B cell (primary cell): ENCODE measurements at regions of chr12 and their contacts with region 1.

Region 1: DNA sequence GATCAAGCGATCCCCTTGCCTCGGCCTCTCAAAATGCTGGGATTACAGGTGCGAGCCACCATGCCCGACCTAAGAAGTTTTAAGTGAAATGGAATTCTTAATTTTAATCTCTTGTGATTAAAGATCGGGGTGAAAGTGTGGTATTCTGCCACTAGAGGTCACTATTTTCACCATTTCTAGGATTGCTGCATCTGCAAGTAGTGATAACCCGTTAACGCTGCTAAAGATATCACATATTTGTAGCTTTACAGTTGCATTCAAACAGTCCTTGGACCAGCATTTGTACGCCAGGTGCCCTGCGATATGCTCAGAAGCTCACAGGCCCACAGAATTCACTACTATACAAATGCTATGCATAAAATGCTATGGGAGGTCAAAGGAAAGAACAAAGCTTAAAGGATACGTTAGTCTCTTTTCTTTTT is 19.3 kb downstream of the CCDC62 start:
- DNase-seq: peak; percentile 76
- ATAC-seq: peak; percentile 86
- H3K4me3 ChIP-seq: no peak overlapping the region
- H3K4me3 Mint-ChIP-seq: no peak overlapping the region
- H3K27ac ChIP-seq: no peak overlapping the region
- H3K27ac Mint-ChIP-seq: no peak overlapping the region
- H3K4me1 ChIP-seq: peaks cover 3 to 6% of the 10 kb centered on the region in 2 donors
- H3K4me1 Mint-ChIP-seq: peaks cover 4% of the 10 kb centered on the region
- H3K27me3 ChIP-seq: no peaks in the 10 kb centered on the region
- H3K27me3 Mint-ChIP-seq: no peaks in the 10 kb centered on the region
- CTCF ChIP-seq: peak; percentile 86

Region 2: DNA sequence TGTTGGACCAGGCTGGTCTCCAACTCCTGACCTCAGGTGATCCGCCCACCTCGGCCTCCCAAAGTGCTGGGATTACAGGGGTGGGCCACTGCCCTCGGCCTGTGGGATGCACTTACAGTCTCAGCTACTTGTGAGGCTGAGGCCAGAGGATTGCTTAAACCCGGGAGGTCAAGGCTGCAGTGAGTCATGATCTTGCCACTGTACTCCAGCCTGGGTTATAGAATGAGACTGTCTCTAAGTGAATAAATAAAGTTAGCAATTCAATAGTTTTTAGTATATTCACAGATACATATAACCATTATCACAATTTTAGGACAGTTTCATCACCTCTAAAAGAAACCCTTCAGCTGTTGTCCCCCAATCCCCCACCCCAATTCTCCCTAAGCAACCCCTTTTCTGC is 151.7 kb before region 1 on chr12:
- CTCF ChIA-PET with region 1: interaction called, 10 read pairs
- POLR2A ChIA-PET with region 1: no interaction called
- intact Hi-C with region 1: no loop called
- DNase-seq: no peak
- ATAC-seq: no peak
- H3K4me3 ChIP-seq: no peak overlapping the region
- H3K4me3 Mint-ChIP-seq: no peak overlapping the region
- H3K27ac ChIP-seq: no peak overlapping the region
- H3K27ac Mint-ChIP-seq: no peak overlapping the region
- H3K4me1 ChIP-seq: peaks cover 0 to 11% of the 10 kb centered on the region in 2 donors
- H3K4me1 Mint-ChIP-seq: peaks cover 9% of the 10 kb centered on the region
- H3K27me3 ChIP-seq: no peaks in the 10 kb centered on the region
- H3K27me3 Mint-ChIP-seq: no peaks in the 10 kb centered on the region
- CTCF ChIP-seq: no peak

Region 3: DNA sequence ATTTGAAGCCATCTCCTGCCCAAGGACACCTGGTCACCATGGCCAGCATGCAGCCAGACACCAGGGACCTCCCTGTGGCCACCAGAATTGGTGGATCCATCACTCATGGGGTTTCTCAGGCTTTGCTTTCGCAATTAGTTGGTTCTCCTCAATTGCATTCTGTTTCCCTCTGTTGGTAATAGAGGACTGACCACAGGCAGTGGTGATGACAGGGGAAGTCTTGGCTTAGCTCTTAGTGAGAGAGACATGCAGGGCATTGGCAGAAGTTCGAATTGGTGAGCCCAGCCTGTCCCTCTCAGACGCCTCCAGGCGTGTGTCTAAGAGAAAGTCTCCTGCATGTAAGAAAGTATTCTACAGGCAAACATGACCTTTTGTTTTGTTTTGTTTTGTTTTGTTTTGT is 111.9 kb before region 1 on chr12:
- CTCF ChIA-PET with region 1: no interaction called
- POLR2A ChIA-PET with region 1: no interaction called
- intact Hi-C with region 1: no loop called
- DNase-seq: no peak
- ATAC-seq: no peak
- H3K4me3 ChIP-seq: no peak overlapping the region
- H3K4me3 Mint-ChIP-seq: no peak overlapping the region
- H3K27ac ChIP-seq: no peak overlapping the region
- H3K27ac Mint-ChIP-seq: no peak overlapping the region
- H3K4me1 ChIP-seq: no peaks in the 10 kb centered on the region
- H3K4me1 Mint-ChIP-seq: no peaks in the 10 kb centered on the region
- H3K27me3 ChIP-seq: no peaks in the 10 kb centered on the region
- H3K27me3 Mint-ChIP-seq: peaks cover 3% of the 10 kb centered on the region
- CTCF ChIP-seq: no peak

Region 4: GRCh38 chr12:122813310-122813713 is 19.6 kb after region 1 on chr12:
- CTCF ChIA-PET with region 1: interaction called, 35 read pairs
- POLR2A ChIA-PET with region 1: interaction called, 4 read pairs
- intact Hi-C with region 1: loop called (anchors 1 kb)
- DNase-seq: peak; percentile 90
- ATAC-seq: peak; percentile 98
- H3K4me3 ChIP-seq: peak overlapping the region in 4 of 5 experiments; percentile 28 to 62 (median 38)
- H3K4me3 Mint-ChIP-seq: peak overlapping the region; percentile 90
- H3K27ac ChIP-seq: peak overlapping the region; percentile 74 to 85
- H3K27ac Mint-ChIP-seq: peak overlapping the region; percentile 96
- H3K4me1 ChIP-seq: peaks cover 29 to 38% of the 10 kb centered on the region in 2 donors
- H3K4me1 Mint-ChIP-seq: peaks cover 45% of the 10 kb centered on the region
- H3K27me3 ChIP-seq: no peaks in the 10 kb centered on the region
- H3K27me3 Mint-ChIP-seq: no peaks in the 10 kb centered on the region
- CTCF ChIP-seq: peak; percentile 42

Region 5: GRCh38 chr12:122845041-122845864 is 51.6 kb after region 1 on chr12:
- CTCF ChIA-PET with region 1: interaction called, 11 read pairs
- POLR2A ChIA-PET with region 1: no interaction called
- intact Hi-C with region 1: no loop called
- DNase-seq: no peak
- ATAC-seq: no peak
- H3K4me3 ChIP-seq: no peak overlapping the region
- H3K4me3 Mint-ChIP-seq: no peak overlapping the region
- H3K27ac ChIP-seq: no peak overlapping the region
- H3K27ac Mint-ChIP-seq: no peak overlapping the region
- H3K4me1 ChIP-seq: peaks cover 0 to 38% of the 10 kb centered on the region in 2 donors
- H3K4me1 Mint-ChIP-seq: peaks cover 47% of the 10 kb centered on the region
- H3K27me3 ChIP-seq: no peaks in the 10 kb centered on the region
- H3K27me3 Mint-ChIP-seq: no peaks in the 10 kb centered on the region
- CTCF ChIP-seq: no peak

Region 6: DNA sequence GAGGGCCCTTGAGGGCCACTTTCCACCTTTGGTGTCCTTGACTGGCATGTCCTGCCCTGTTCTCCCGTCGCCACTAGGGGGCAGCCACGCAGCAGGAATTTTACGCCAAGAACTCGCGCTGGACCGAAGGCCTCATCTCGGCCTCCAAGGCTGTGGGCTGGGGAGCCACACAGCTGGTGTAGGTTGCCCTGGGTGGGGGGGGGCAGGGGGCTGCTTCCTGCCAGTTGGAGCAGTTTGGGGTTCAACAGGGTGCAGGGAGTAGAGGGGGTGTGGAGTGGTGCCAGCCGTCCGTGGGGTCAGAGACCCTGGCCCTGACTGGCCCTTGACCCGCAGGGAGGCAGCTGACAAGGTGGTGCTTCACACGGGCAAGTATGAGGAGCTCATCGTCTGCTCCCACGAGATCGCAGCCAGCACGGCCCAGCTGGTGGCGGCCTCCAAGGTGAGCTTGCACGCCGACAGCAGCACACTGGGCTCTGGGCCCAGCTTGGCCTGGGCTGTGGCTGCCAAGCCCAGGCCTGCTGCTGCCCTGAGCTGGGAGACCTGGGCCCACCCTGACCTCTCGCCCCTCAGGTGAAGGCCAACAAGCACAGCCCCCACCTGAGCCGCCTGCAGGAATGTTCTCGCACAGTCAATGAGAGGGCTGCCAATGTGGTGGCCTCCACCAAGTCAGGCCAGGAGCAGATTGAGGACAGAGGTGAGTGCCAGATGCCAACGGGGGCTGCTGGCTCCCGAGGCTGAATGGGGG is 66.8 kb after region 1 on chr12:
- CTCF ChIA-PET with region 1: interaction called, 101 read pairs
- POLR2A ChIA-PET with region 1: interaction called, 9 read pairs
- intact Hi-C with region 1: loop called (anchors 1 kb)
- DNase-seq: peak; percentile 86
- ATAC-seq: peak; percentile 59
- H3K4me3 ChIP-seq: no peak overlapping the region
- H3K4me3 Mint-ChIP-seq: no peak overlapping the region
- H3K27ac ChIP-seq: peak overlapping the region in 1 of 2 donors; percentile 43
- H3K27ac Mint-ChIP-seq: peak overlapping the region; percentile 73
- H3K4me1 ChIP-seq: peaks cover 27 to 48% of the 10 kb centered on the region in 2 donors
- H3K4me1 Mint-ChIP-seq: peaks cover 46% of the 10 kb centered on the region
- H3K27me3 ChIP-seq: no peaks in the 10 kb centered on the region
- H3K27me3 Mint-ChIP-seq: no peaks in the 10 kb centered on the region
- CTCF ChIP-seq: peak; percentile 82

Region 7: GRCh38 chr12:122871851-122872780 is 78.4 kb after region 1 on chr12:
- CTCF ChIA-PET with region 1: interaction called, 19 read pairs
- POLR2A ChIA-PET with region 1: no interaction called
- intact Hi-C with region 1: no loop called
- DNase-seq: peak; percentile 86
- ATAC-seq: peak; percentile 69
- H3K4me3 ChIP-seq: peak overlapping the region; percentile 52 to 89 (median 69)
- H3K4me3 Mint-ChIP-seq: peak overlapping the region; percentile 86
- H3K27ac ChIP-seq: peak overlapping the region; percentile 69 to 80
- H3K27ac Mint-ChIP-seq: peak overlapping the region; percentile 95
- H3K4me1 ChIP-seq: peaks cover 93 to 95% of the 10 kb centered on the region in 2 donors
- H3K4me1 Mint-ChIP-seq: peaks cover 93% of the 10 kb centered on the region
- H3K27me3 ChIP-seq: no peaks in the 10 kb centered on the region
- H3K27me3 Mint-ChIP-seq: no peaks in the 10 kb centered on the region
- CTCF ChIP-seq: no peak

Region 8: GRCh38 chr12:122946690-122947341 is 153.1 kb after region 1 on chr12:
- CTCF ChIA-PET with region 1: interaction called, 93 read pairs
- POLR2A ChIA-PET with region 1: no interaction called
- intact Hi-C with region 1: loop called (anchors 1 kb)
- DNase-seq: peak; percentile 46
- ATAC-seq: peak; percentile 67
- H3K4me3 ChIP-seq: no peak overlapping the region
- H3K4me3 Mint-ChIP-seq: peak overlapping the region; percentile 54
- H3K27ac ChIP-seq: no peak overlapping the region
- H3K27ac Mint-ChIP-seq: peak overlapping the region; percentile 47
- H3K4me1 ChIP-seq: peaks cover 25 to 33% of the 10 kb centered on the region in 2 donors
- H3K4me1 Mint-ChIP-seq: peaks cover 42% of the 10 kb centered on the region
- H3K27me3 ChIP-seq: no peaks in the 10 kb centered on the region
- H3K27me3 Mint-ChIP-seq: no peaks in the 10 kb centered on the region
- CTCF ChIP-seq: no peak

Region 9: GRCh38 chr12:123013185-123014095 is 219.7 kb after region 1 on chr12:
- CTCF ChIA-PET with region 1: no interaction called
- POLR2A ChIA-PET with region 1: no interaction called
- intact Hi-C with region 1: no loop called
- DNase-seq: no peak
- ATAC-seq: no peak
- H3K4me3 ChIP-seq: no peak overlapping the region
- H3K4me3 Mint-ChIP-seq: no peak overlapping the region
- H3K27ac ChIP-seq: no peak overlapping the region
- H3K27ac Mint-ChIP-seq: no peak overlapping the region
- H3K4me1 ChIP-seq: no peaks in the 10 kb centered on the region
- H3K4me1 Mint-ChIP-seq: no peaks in the 10 kb centered on the region
- H3K27me3 ChIP-seq: no peaks in the 10 kb centered on the region
- H3K27me3 Mint-ChIP-seq: no peaks in the 10 kb centered on the region
- CTCF ChIP-seq: no peak

Region 10: DNA sequence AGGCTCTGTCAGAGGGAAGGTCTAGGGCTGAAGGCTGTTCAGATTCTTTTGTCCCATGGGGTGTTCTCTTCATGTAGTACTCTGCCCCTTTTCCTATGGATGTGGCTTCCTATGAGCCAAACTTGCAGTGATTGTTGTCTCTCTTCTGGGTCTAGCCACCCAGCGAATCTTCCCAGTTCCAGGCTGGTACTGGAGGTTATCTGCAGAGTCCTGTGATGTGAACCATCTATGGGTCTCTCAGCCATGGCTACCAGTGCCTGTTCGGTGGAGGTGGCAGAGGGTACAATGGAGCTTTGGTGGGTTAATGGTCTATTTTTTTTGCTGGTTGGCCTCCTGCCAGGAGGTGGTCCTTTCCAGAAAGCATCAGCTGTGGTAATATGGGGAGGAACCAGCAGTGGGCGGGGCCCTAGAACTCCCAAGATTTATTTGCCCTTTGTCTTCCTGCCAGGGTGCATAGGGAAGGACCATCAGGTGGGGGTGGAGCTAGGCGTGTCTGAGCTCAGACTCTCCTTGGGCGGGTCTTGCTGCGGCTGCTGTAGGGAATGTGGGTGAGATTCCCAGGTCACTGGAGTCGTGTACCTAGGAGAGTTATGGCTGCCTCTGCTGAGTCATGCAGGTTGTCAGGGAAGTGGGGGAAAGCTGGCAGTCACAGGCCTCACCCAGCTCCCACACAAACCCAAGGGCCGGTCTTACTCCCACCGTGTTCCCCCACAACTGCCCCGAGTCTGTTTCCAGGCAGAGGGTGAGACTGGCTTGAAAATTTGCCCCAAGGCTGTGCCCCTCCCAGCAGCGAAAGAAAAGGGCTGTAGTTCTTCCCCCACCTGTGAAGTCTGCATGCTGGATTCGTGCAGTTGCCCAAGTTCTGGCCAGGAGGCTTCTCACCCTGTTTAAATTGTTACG is 457.0 kb after region 1 on chr12:
- CTCF ChIA-PET with region 1: no interaction called
- POLR2A ChIA-PET with region 1: no interaction called
- intact Hi-C with region 1: no loop called
- DNase-seq: no peak
- ATAC-seq: no peak
- H3K4me3 ChIP-seq: no peak overlapping the region
- H3K4me3 Mint-ChIP-seq: no peak overlapping the region
- H3K27ac ChIP-seq: no peak overlapping the region
- H3K27ac Mint-ChIP-seq: no peak overlapping the region
- H3K4me1 ChIP-seq: peaks cover 0 to 3% of the 10 kb centered on the region in 2 donors
- H3K4me1 Mint-ChIP-seq: peaks cover 35% of the 10 kb centered on the region
- H3K27me3 ChIP-seq: no peaks in the 10 kb centered on the region
- H3K27me3 Mint-ChIP-seq: no peaks in the 10 kb centered on the region
- CTCF ChIP-seq: no peak